HAP-1 (cell line): ENCODE measurements at regions of chr10 and their contacts with region 1.

Region 1: DNA sequence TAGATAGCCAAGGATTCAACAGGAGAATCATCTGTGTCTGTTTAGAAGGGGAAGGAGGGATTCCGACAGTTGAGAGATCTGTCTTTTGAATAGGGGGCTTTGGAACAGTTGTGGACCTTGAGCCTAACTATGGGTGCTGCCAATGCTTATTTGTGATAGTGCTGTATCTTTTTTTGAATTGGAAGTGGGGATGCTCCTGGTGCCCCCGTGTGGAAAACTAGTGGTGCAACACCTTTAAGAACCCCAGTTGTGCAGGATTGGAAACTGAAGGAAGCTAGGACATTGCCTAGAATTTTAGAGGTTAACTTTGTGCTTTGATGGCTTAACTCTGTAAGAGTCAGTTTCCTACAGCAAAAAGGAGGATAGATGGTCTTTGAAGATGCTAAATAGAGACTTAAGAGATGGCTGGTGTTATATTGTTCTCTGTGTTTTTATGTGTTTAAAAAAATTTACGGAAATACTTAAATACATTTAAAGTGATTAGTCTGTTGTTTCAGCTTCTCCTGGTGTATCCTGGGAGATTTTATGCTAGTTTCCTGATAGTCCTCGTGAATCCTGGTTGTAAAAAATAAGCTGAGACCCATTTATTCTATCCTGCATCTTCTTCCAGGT is 69.3 kb downstream of the AP3M1 start:
- DNase-seq: peak; percentile 57 to 65
- H3K4me3 ChIP-seq: no peak overlapping the region
- H3K4me1 ChIP-seq: peaks cover 8% of the 10 kb centered on the region; the same call in 1 of the 2 replicates
- H3K27me3 ChIP-seq: no peaks in the 10 kb centered on the region

Region 2: GRCh38 chr10:73886085-73886529 is 195.2 kb before region 1 on chr10:
- in situ Hi-C with region 1: loop called (anchors 5 kb)
- DNase-seq: peak; percentile 65 to 86
- H3K4me3 ChIP-seq: no peak overlapping the region
- H3K4me1 ChIP-seq: no peaks in the 10 kb centered on the region
- H3K27me3 ChIP-seq: no peaks in the 10 kb centered on the region